ENCODE measurements at regions of chr18 and their contacts with region 1.

Region 1: DNA sequence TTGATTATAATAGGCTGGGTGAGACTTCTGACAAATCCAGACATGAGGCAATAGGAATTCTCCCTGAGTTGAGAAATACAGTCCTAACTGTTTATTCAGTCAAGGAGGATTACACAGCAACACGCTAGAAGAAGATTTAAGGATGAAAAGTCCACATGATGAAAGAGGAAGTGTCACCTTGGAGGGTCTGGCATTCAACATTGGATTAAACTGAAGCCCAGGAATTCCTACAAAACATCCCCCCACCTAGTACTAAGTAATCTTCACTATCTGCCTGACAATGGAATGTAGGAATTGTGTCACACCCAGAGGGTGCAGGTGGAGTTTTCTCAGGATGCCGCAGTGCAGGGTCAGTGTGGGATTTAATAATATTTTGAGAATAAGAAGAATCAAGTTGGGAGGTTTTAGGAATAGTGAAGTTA is 142.4 kb downstream of the SOCS6 start:
- DNase-seq: no peak
- H3K4me3 Mint-ChIP-seq: no peak overlapping the region
- H3K27ac Mint-ChIP-seq: no peak overlapping the region
- H3K4me1 Mint-ChIP-seq: no peaks in the 10 kb centered on the region
- H3K27me3 Mint-ChIP-seq: no peaks in the 10 kb centered on the region

Region 2: GRCh38 chr18:68847219-68847837 is 1583.9 kb before region 1 on chr18:
- CTCF ChIA-PET with region 1: no interaction called
- POLR2A ChIA-PET with region 1: no interaction called
- intact Hi-C with region 1: loop called (anchors 1 kb)
- DNase-seq: no peak
- H3K4me3 Mint-ChIP-seq: no peak overlapping the region
- H3K27ac Mint-ChIP-seq: no peak overlapping the region
- H3K4me1 Mint-ChIP-seq: no peaks in the 10 kb centered on the region
- H3K27me3 Mint-ChIP-seq: no peaks in the 10 kb centered on the region

Region 3: DNA sequence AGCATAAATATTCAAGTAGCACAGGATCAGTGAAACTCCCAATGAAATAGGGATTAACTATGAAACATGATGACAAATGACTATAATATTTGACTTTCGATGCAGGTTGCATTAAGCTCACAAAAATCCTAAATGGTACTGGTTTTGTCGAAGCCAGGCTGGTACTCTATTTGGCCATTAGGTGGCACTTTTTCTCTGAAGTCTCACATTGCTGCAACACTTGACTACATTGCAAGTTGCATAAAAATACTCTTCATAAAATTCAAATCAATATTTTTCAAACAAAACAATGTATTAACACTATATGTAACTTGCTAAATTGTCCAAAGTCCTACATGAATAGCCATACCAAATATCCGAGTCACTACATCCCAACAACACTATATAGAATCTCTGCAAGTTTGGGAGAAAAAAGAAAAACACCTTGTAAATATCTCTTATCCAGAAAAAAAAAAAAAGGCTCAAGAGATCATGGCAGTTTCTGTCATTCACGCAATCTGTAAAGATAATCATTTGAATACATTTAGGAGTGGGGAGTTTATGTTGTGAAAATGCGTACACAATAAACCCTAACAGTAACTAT is 235.3 kb before region 1 on chr18:
- CTCF ChIA-PET with region 1: interaction called, 82 read pairs
- POLR2A ChIA-PET with region 1: no interaction called
- intact Hi-C with region 1: loop called (anchors 1 kb)
- DNase-seq: peak; percentile 16
- H3K4me3 Mint-ChIP-seq: no peak overlapping the region
- H3K27ac Mint-ChIP-seq: no peak overlapping the region
- H3K4me1 Mint-ChIP-seq: peaks cover 33% of the 10 kb centered on the region
- H3K27me3 Mint-ChIP-seq: no peaks in the 10 kb centered on the region

Region 4: GRCh38 chr18:70288851-70289328 is 142.3 kb before region 1 on chr18 and contains the start of gene SOCS6:
- CTCF ChIA-PET with region 1: interaction called, 3 read pairs
- POLR2A ChIA-PET with region 1: no interaction called
- intact Hi-C with region 1: loop called (anchors 10 kb)
- DNase-seq: peak; percentile 54
- H3K4me3 Mint-ChIP-seq: peak within 1 kb of the TSS; percentile 77
- H3K27ac Mint-ChIP-seq: peak within 1 kb of the TSS; percentile 49
- H3K4me1 Mint-ChIP-seq: peaks cover 13% of the 10 kb centered on the region
- H3K27me3 Mint-ChIP-seq: peaks cover 44% of the 10 kb centered on the region
- total RNA-seq, gene SOCS6: 0.75 to 1.3 TPM

Region 5: GRCh38 chr18:70454704-70455322 is 23.6 kb after region 1 on chr18:
- CTCF ChIA-PET with region 1: interaction called, 14 read pairs
- POLR2A ChIA-PET with region 1: no interaction called
- intact Hi-C with region 1: no loop called
- DNase-seq: peak; percentile 27
- H3K4me3 Mint-ChIP-seq: no peak overlapping the region
- H3K27ac Mint-ChIP-seq: no peak overlapping the region
- H3K4me1 Mint-ChIP-seq: no peaks in the 10 kb centered on the region
- H3K27me3 Mint-ChIP-seq: peaks cover 3% of the 10 kb centered on the region

Measured in activated CD4-positive, alpha-beta memory T cell treated with anti-CD3 and anti-CD28 coated beads for 36 hours (primary cell).